ENCODE measurements at regions of chr5 and their contacts with region 1.

Region 1: DNA sequence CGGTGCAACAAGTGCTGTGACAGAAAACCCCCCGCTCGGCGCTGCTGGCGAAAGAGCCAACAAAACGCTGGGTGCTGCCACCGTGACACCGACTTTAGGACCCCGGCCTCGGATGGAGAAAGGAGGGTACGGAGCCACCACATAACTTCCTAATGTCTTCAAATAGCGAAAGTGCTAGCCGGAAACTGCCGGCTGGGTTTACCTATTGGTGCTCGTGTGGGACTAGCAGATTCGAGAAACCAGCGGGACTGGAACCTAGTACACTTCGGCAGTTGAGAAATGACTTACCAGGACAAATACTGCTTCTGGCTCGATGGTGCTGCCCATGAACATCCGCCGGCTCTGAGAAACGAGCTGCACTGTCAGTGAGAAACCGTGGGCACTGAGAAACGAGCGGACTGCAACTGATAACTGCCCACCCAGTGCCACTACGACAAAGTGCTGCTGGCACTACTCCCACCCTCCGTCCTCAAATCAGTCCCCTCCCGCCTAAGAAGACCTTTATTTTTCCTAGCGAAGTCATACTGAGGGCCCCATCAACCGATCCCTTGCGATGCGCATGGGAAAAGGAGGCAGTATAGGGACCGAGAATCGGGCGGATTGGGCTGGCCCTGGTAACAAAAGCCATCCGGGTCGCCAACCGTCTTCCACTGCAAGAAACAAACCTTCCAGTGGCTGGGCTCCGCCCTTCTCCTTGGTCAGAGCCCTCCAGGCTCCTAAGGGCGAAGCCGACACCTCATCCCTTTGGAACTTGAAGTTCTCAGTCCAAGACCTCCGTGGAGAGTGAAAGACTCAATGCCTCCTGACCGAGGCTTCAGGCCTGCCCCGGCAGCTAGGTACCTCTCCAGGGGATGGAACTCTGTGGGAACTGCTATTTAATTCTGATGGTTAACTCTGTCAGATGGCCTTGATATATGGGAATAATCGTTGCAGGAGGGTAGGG is 27.0 kb upstream of the ANXA2R start:
- DNase-seq: peak; percentile 87 to 95
- ATAC-seq: peak; percentile 51 to 74 (median 57)
- H3K4me3 ChIP-seq: peak overlapping the region; percentile 72
- H3K4me3 Mint-ChIP-seq: peak overlapping the region; percentile 100
- H3K27ac ChIP-seq: peak overlapping the region; percentile 96
- H3K27ac Mint-ChIP-seq: peak overlapping the region; percentile 97 to 100
- H3K4me1 ChIP-seq: peaks cover 46% of the 10 kb centered on the region
- H3K4me1 Mint-ChIP-seq: peaks cover 41 to 51% of the 10 kb centered on the region in 2 donors
- H3K27me3 ChIP-seq: no peaks in the 10 kb centered on the region
- H3K27me3 Mint-ChIP-seq: no peaks in the 10 kb centered on the region
- CTCF ChIP-seq: no peak

Region 2: GRCh38 chr5:42321785-42322184 is 745.3 kb before region 1 on chr5:
- intact Hi-C with region 1: no loop called
- DNase-seq: no peak
- ATAC-seq: no peak
- H3K4me3 ChIP-seq: no peak overlapping the region
- H3K4me3 Mint-ChIP-seq: no peak overlapping the region
- H3K27ac ChIP-seq: no peak overlapping the region
- H3K27ac Mint-ChIP-seq: no peak overlapping the region
- H3K4me1 ChIP-seq: no peaks in the 10 kb centered on the region
- H3K4me1 Mint-ChIP-seq: no peaks in the 10 kb centered on the region
- H3K27me3 ChIP-seq: no peaks in the 10 kb centered on the region
- H3K27me3 Mint-ChIP-seq: no peaks in the 10 kb centered on the region
- CTCF ChIP-seq: no peak

Region 3: DNA sequence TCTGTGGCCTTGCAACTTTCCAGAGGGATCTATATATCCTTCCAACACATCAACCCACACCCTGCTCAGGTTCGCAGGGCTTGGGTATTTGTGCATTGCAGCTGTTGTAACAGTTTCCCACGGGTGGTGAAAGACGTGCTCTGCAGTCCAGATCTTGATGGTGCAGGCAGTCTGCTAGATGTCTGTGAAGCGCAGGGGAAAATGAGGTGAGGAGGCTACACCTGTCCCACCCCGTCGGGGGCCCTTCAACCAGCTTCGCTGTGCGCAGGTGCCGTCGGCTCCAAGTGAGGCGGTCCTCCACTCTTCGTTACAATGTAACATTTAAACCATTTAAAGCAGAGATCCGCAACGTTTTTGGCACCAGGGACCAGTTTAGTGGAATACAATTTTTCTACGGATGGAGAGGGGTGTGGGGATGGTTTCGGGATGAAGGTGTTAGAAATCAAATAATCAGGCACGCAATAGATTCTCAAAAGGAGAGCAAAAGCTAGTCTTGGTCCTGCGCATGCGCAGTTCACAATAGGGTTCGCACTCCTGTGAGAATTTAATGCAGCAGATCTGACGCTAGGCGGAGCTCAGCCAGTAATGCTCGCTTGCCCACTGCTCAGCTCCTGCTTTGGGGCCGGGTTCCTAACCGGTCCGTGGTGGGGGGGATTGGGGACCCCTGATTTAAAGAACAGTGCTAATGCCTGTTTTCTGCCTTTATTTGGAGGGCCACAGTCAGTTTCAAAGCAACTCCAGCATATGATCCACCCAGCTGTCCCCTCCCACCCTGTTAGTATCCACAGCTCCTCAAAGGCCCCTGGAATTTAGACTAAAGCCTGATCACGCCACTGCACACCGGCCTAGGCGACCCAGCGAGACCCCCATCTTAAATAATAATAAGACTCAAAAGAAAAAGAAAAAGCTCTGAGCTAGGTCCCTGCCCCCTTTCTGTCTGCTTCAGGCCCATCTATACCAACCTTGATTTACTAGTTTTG is 158.3 kb before region 1 on chr5:
- intact Hi-C with region 1: loop called (anchors 2 kb)
- DNase-seq: peak; percentile 83 to 98
- ATAC-seq: peak; percentile 84 to 95 (median 93)
- H3K4me3 ChIP-seq: peak overlapping the region; percentile 67
- H3K4me3 Mint-ChIP-seq: peak overlapping the region; percentile 96
- H3K27ac ChIP-seq: peak overlapping the region; percentile 41
- H3K27ac Mint-ChIP-seq: peak overlapping the region; percentile 86 to 90
- H3K4me1 ChIP-seq: peaks cover 8% of the 10 kb centered on the region
- H3K4me1 Mint-ChIP-seq: peaks cover 8 to 14% of the 10 kb centered on the region in 2 donors
- H3K27me3 ChIP-seq: no peaks in the 10 kb centered on the region
- H3K27me3 Mint-ChIP-seq: peaks cover 15 to 26% of the 10 kb centered on the region in 2 donors
- CTCF ChIP-seq: peak; percentile 81

Region 4: GRCh38 chr5:43008369-43009153 is 58.5 kb before region 1 on chr5:
- intact Hi-C with region 1: loop called (anchors 1 kb)
- DNase-seq: peak; percentile 82 to 97
- ATAC-seq: peak; percentile 61 to 79 (median 65)
- H3K4me3 ChIP-seq: peak overlapping the region; percentile 81
- H3K4me3 Mint-ChIP-seq: peak overlapping the region; percentile 89
- H3K27ac ChIP-seq: peak overlapping the region; percentile 88
- H3K27ac Mint-ChIP-seq: peak overlapping the region; percentile 99 to 100
- H3K4me1 ChIP-seq: peaks cover 36% of the 10 kb centered on the region
- H3K4me1 Mint-ChIP-seq: peaks cover 27 to 49% of the 10 kb centered on the region in 2 donors
- H3K27me3 ChIP-seq: no peaks in the 10 kb centered on the region
- H3K27me3 Mint-ChIP-seq: no peaks in the 10 kb centered on the region
- CTCF ChIP-seq: no peak

Region 5: DNA sequence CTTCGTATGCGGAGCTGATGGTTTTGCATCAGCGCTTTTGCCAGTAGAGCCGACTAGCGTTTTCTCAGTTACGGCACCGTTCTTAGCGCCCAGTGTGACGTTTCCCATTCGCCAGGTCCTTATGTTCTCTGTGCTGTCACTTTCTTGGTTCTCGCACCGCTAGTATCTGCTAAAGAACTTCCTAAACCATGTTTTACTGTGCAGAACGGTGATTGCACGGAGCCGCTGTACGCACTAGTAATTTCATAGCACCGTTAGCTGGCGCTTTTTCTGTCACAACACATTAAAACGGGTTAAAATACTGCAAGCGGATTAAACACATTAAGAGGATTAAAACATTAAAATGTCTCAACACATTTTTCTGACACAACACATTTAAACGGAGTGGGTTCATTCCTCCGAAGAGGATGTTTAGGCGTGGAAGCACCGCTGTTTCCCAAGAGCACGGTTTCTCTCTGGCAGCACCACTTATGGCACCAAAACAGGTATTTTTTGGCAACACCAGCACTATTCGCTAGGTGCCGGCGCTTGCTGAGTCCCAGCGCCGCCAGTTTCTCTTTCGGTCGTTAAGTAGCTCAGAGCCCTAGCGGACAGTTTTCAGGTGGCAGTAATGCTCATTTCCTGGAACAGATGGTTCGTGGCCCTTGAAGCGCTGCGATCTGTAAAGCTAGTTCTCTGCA is 47.3 kb before region 1 on chr5:
- intact Hi-C with region 1: loop called (anchors 1 kb)
- DNase-seq: peak; percentile 73 to 96
- ATAC-seq: peak; percentile 64 to 83 (median 64)
- H3K4me3 ChIP-seq: peak overlapping the region; percentile 58
- H3K4me3 Mint-ChIP-seq: peak overlapping the region; percentile 91
- H3K27ac ChIP-seq: peak overlapping the region; percentile 93
- H3K27ac Mint-ChIP-seq: peak overlapping the region; percentile 99 to 100
- H3K4me1 ChIP-seq: peaks cover 22% of the 10 kb centered on the region
- H3K4me1 Mint-ChIP-seq: peaks cover 45 to 56% of the 10 kb centered on the region in 2 donors
- H3K27me3 ChIP-seq: no peaks in the 10 kb centered on the region
- H3K27me3 Mint-ChIP-seq: no peaks in the 10 kb centered on the region
- CTCF ChIP-seq: peak; percentile 61

Region 6: DNA sequence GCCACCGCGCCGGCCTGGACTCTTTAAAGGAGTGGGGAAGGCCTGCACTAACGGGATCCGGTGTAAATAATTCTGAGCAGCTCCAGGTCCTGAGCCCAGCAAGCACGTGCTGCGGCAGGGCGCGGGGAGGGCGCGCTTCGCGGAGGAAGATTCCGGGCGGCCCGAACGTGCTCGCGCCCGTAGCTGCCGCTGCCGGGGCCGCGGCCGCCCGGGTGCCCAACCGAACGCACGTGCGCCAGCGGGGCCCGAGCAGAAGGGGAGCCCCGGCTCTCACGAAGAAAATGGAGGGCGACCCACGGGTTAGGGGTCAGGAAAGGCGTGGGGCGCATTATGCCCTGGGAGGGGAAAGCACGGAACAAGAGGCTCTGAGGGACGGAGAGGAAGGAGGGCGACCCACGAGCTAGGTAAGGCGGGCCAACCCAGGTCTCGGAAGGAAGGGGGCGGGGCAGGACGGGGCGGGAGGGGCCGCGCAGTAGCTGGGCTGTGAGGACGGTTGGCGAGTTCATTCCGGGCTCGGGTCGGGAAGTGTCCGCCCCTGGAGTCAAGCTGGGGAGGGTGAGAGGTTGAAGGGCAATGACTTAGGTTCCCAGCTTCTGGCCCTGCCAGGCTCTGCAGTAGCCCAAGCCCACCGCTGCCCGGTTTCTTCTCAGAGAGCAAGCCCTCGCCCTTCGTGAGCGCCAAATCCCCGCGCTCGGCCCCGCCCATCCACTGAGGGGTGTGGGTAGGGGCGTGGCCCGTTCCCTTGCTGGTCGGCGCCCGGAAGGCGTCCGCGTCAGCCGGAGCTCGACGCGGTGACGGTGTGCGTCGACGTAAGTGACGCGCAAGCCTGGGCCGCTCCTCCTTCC is 53.9 kb after region 1 on chr5 and contains the start of gene ZNF131:
- intact Hi-C with region 1: loop called (anchors 1 kb)
- DNase-seq: peak; percentile 99
- ATAC-seq: peak; percentile 87 to 96 (median 89)
- H3K4me3 ChIP-seq: peak within 1 kb of the TSS; percentile 59
- H3K4me3 Mint-ChIP-seq: peak within 1 kb of the TSS; percentile 87
- H3K27ac ChIP-seq: peak within 1 kb of the TSS; percentile 88
- H3K27ac Mint-ChIP-seq: peak within 1 kb of the TSS; percentile 88 to 99
- H3K4me1 ChIP-seq: peaks cover 13% of the 10 kb centered on the region
- H3K4me1 Mint-ChIP-seq: peaks cover 26 to 29% of the 10 kb centered on the region in 2 donors
- H3K27me3 ChIP-seq: no peaks in the 10 kb centered on the region
- H3K27me3 Mint-ChIP-seq: no peaks in the 10 kb centered on the region
- CTCF ChIP-seq: no peak
- total RNA-seq, gene ZNF131: 69.0 to 84.0 (median 83.5) TPM

Measured in natural killer cell (primary cell).